ENCODE measurements at regions of chr13 and their contacts with region 1.

Region 1: GRCh38 chr13:50189450-50189849 is 174.2 kb downstream of the KCNRG start:
- DNase-seq: no peak
- ATAC-seq: peak; percentile 71
- H3K4me3 Mint-ChIP-seq: no peak overlapping the region
- H3K27ac Mint-ChIP-seq: no peak overlapping the region
- H3K4me1 Mint-ChIP-seq: peaks cover 42% of the 10 kb centered on the region
- H3K27me3 Mint-ChIP-seq: peaks cover 2% of the 10 kb centered on the region; the same call in 1 of the 2 replicates
- CTCF ChIP-seq: no peak

Region 2: GRCh38 chr13:50200988-50201387 is 11.5 kb after region 1 on chr13:
- CTCF ChIA-PET with region 1: interaction called, 13 read pairs
- POLR2A ChIA-PET with region 1: no interaction called
- DNase-seq: no peak
- ATAC-seq: no peak
- H3K4me3 Mint-ChIP-seq: no peak overlapping the region
- H3K27ac Mint-ChIP-seq: no peak overlapping the region
- H3K4me1 Mint-ChIP-seq: peaks cover 20% of the 10 kb centered on the region
- H3K27me3 Mint-ChIP-seq: no peaks in the 10 kb centered on the region
- CTCF ChIP-seq: no peak

Region 3: DNA sequence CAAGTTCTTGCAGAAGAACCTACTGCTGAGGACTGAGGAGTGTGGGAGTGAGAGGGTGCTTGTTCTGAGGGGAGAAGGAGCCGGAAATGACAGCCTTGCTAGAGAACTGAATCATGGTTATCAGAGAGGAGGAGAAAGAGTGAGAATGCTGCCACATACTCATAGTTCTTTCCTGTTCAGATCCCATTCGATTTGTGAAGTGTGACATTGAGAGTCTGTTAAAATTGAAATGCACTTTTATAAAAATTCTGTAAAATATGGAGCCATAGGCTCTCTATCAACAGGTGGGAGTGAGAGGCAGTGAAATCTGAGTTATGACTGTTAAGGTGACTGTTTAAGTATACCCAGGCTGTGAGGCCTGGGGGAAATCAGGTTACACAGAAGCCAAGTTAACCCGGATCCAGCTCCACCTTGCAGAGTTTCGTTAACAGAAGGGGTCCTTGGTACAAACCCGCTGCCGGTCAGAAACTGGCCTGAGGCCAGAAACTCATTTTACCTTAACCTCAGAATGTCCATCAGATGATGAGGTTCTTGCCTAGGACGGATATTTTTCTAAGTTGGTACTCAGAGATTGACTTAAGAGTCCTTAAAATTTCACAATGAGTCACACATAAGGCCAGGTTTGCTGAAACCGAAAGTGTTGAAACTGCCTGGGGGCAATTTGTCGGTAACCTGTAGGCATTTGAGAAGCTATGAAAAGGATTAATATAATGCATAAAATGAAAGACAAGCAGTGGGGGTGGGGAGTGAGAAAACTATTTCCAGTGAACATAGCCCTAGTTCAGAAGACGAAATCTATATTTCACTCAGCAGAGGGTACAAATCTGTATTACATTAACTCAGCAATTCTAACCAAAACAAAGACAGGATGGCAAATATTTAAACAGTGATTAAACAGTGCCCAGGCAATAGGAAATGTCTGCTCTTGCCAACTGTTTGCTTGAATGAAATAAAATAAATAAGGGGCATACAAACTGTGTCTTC is 176.2 kb after region 1 on chr13:
- CTCF ChIA-PET with region 1: no interaction called
- POLR2A ChIA-PET with region 1: no interaction called
- DNase-seq: no peak
- ATAC-seq: no peak
- H3K4me3 Mint-ChIP-seq: no peak overlapping the region
- H3K27ac Mint-ChIP-seq: no peak overlapping the region
- H3K4me1 Mint-ChIP-seq: peaks cover 16% of the 10 kb centered on the region
- H3K27me3 Mint-ChIP-seq: no peaks in the 10 kb centered on the region
- CTCF ChIP-seq: no peak

Measured in WTC11 (cell line).